ENCODE measurements at regions of chr19 and their contacts with region 1.

Region 1: DNA sequence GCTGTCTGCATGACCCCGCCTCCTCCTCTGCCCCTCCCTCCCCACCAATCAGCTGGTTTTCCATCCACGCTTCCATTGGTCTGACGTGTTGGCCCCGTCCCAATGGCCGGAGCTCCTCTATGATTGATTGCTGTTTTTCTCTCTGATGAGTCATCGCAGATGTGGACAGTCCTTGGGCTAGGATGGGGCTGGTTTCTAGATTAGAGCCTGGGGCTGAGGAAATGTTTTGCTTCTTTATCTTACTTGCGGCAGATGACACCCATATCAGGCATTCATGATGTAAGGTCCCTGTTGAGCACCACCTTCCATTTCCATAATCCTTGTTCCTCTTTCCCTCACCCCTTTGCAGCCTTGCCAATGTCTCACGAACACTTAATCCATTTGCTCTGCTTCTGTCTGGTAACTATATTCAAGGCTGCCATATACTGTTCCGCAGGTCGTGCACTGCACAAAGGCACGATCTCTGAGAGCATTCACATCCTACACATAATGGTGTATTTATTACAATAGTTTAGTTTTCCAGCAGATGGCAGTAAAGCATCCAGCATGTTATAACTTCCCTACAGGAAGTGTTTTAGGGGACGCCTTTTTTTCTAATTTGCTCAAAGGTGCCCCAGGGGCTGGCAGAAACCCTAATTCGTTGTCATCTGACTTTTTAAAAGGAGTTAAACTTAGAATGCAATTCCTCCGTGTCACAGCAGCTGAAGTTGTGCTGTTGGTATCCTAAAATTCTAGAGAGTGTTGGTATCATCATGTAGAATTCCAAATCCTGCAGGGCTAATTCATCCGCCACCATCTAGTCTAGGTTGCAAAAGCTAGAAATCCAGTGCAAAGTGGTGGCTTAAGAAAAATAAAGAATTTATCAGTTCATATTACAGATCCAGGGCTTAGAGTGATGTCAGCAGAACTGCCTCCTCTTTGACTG is 73.5 kb downstream of the MAP4K1 start:
- DNase-seq: no peak
- H3K4me3 ChIP-seq: peak overlapping the region in 1 of 2 donors; percentile 15
- H3K27ac ChIP-seq: no peak overlapping the region
- H3K4me1 ChIP-seq: peaks cover 15% of the 10 kb centered on the region
- H3K27me3 ChIP-seq: no peaks in the 10 kb centered on the region
- CTCF ChIP-seq: peak in 2 of 3 experiments; percentile 43 to 52
- POLR2A ChIP-seq: no peak

Region 2: GRCh38 chr19:38929929-38930775 is 385.9 kb after region 1 on chr19 and contains the start of gene SARS2:
- intact Hi-C with region 1: loop called (anchors 10 kb)
- DNase-seq: peak in 1 of 2 donors; percentile 95
- H3K4me3 ChIP-seq: peak within 1 kb of the TSS; percentile 81 to 87
- H3K27ac ChIP-seq: peak within 1 kb of the TSS; percentile 82
- H3K4me1 ChIP-seq: peaks cover 26% of the 10 kb centered on the region
- H3K27me3 ChIP-seq: no peaks in the 10 kb centered on the region
- CTCF ChIP-seq: peak; percentile 95 to 98 (median 97)
- POLR2A ChIP-seq: no peak
- total RNA-seq, gene SARS2: 26.3 TPM

Measured in vagina (tissue), 2 donors.